Activated CD4-positive, alpha-beta T cell treated with anti-CD3 and anti-CD28 coated beads for 36 hours (primary cell): ENCODE measurements at regions of chr13 and their contacts with region 1.

Region 1: GRCh38 chr13:114132419-114133121 is at the start of gene RASA3:
- DNase-seq: peak; percentile 74
- ATAC-seq: peak; percentile 35
- H3K4me3 Mint-ChIP-seq: peak within 1 kb of the TSS; percentile 100
- H3K27ac Mint-ChIP-seq: peak within 1 kb of the TSS; percentile 95
- H3K4me1 Mint-ChIP-seq: peaks cover 39% of the 10 kb centered on the region
- H3K27me3 Mint-ChIP-seq: no peaks in the 10 kb centered on the region
- total RNA-seq, gene RASA3: 33.0 to 34.7 TPM

Region 2: GRCh38 chr13:113881614-113882266 is 250.8 kb before region 1 on chr13:
- CTCF ChIA-PET with region 1: no interaction called
- POLR2A ChIA-PET with region 1: no interaction called
- intact Hi-C with region 1: no loop called
- DNase-seq: no peak
- ATAC-seq: peak; percentile 36
- H3K4me3 Mint-ChIP-seq: no peak overlapping the region
- H3K27ac Mint-ChIP-seq: no peak overlapping the region
- H3K4me1 Mint-ChIP-seq: peaks cover 20% of the 10 kb centered on the region
- H3K27me3 Mint-ChIP-seq: no peaks in the 10 kb centered on the region

Region 3: GRCh38 chr13:114143806-114144605 is 11.4 kb after region 1 on chr13:
- CTCF ChIA-PET with region 1: interaction called, 7 read pairs
- POLR2A ChIA-PET with region 1: interaction called, 5 read pairs
- intact Hi-C with region 1: loop called (anchors 1 kb)
- DNase-seq: peak; percentile 76
- ATAC-seq: peak; percentile 47
- H3K4me3 Mint-ChIP-seq: no peak overlapping the region
- H3K27ac Mint-ChIP-seq: peak overlapping the region; percentile 39
- H3K4me1 Mint-ChIP-seq: peaks cover 12% of the 10 kb centered on the region
- H3K27me3 Mint-ChIP-seq: no peaks in the 10 kb centered on the region